Sciatic nerve (tissue), 2 donors: ENCODE measurements at regions of chr17 and their contacts with region 1.

Region 1: GRCh38 chr17:65865715-65866425 is 304.4 kb upstream of the AXIN2 start:
- DNase-seq: no peak
- ATAC-seq: peak; percentile 24

Region 2: DNA sequence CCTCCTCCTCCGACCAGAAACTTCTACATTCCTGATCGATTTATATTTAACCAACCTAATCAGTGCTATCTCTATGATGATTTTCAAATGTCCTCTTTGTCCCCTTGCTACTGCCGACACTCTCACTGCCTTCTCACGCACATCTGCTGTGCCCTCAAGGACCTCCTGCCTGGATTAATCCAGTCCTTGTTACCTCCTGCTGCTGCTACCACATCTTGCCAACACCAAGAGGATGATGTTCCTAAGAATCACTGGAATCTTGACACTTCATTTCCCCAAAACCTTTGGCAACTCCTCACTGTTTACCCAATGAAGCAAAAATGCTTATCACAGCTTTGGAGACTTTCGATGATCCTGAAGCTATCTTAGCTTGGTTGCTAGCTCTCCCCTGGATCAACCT is 17.1 kb before region 1 on chr17:
- intact Hi-C with region 1: loop called (anchors 1 kb)
- DNase-seq: no peak
- ATAC-seq: no peak

Region 3: GRCh38 chr17:65925606-65926307 is 59.9 kb after region 1 on chr17:
- intact Hi-C with region 1: no loop called
- DNase-seq: no peak
- ATAC-seq: peak; percentile 94